Activated CD4-positive, alpha-beta T cell treated with anti-CD3 and anti-CD28 coated beads, Interleukin-2, amount 10 ng/mL, durations not matched to agents 7 days and 5 days (primary cell): ENCODE measurements at regions of chr5 and their contacts with region 1.

Region 1: DNA sequence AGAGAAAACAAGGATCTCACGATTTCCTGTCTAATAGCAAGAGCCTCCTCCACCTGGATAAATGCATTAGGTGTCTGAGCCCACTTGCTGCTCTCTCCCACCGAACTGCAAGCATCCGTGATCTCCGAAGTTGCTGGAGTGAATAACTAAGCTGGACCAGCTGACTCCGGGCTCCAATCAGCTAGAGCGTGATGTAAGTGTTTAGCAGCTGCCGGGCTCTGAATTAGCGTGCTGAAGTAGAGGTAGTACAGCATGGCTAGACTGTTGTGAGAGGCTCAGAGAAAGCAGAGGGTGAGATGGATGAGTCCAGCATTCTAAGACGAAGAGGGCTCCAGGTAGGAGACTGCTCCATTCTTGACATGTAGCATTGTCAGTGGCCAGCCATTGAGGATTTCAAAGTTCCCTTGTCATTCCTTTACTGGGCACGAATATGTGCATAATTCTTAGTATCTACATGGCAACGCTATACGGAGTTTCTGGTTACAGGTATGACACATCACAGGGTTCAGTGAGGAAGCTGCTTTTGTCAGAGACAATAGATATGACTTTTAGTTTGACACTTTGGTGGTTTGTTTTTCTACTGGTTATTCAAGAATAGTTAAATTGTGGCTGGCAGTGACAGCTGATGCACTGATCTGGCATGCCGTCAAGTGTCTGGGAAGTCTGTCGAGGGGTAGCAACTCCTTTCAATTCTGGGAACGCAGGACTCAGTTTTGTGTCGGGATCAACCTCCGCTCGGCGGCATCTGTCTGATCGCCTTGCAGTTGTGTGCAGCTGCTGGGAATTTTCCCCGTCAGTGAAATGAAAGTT is 232.6 kb downstream of the MAST4 start:
- DNase-seq: peak; percentile 79
- H3K4me3 Mint-ChIP-seq: peak overlapping the region; percentile 83
- H3K27ac Mint-ChIP-seq: peak overlapping the region; percentile 89
- H3K4me1 Mint-ChIP-seq: peaks cover 51% of the 10 kb centered on the region
- H3K27me3 Mint-ChIP-seq: no peaks in the 10 kb centered on the region

Region 2: DNA sequence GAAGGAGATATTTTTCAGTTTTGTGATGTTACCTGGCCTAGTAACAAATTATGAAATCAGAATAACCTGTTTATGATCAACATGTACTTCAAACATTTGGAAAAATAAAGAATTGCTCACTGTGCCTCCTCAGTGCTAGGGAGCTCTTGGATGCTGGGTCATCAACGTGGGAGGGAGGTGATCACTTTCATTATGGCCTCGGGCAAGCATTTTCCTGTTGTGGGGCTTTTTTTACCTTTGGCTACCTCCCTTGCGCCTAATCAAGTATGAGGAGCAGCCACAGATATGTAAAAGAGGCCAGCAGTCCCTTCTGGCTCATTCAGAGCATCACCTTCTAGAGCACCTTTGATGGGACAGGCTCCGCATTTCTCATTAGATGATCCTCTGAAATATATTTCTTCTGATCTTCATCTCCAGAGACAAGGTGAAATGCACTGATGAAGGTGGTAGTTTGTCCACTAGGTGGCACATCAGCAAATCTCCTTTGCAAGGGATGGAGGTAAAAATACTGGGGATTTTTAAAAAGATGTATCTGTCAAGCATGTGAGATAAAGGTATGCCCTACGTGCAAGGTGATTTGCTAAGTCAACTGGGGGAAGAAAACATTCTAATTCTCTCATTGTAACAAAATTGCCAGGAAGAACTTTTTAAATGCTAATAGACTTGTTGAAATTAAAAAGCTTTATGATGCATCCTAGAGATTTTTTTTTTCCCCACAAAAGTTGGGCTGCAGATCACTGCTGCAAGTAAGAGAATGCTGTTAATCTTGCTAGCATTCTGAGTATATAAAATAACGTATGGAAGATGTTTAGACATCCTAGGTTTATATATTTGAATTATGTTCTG is 14.4 kb before region 1 on chr5:
- CTCF ChIA-PET with region 1: interaction called, 29 read pairs
- POLR2A ChIA-PET with region 1: no interaction called
- DNase-seq: peak; percentile 67
- H3K4me3 Mint-ChIP-seq: no peak overlapping the region
- H3K27ac Mint-ChIP-seq: no peak overlapping the region
- H3K4me1 Mint-ChIP-seq: peaks cover 21% of the 10 kb centered on the region
- H3K27me3 Mint-ChIP-seq: peaks cover 6% of the 10 kb centered on the region

Region 3: DNA sequence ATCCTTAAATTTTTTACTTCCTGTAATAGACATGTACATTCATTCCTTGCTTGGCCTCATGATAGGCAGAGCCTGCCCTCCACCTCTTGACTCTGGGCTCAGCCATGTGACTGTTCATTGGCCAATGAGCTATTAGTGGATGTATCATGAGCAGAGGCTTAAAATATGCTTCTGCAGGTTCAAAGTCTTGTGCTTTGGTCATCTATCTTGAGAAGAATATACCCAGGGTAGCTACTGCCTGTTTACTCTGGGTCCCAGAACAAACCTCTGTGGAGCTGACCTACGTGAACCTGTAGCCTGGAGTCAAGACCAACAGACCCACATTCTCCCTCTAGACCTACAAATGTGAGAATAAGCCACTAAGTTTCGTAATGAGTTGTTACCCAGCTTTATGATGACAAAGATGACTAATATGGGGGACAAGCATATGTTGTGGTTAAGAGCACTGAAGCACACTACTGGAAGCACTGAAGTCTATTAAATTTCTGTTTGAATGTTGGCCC is 11.8 kb after region 1 on chr5:
- CTCF ChIA-PET with region 1: interaction called, 31 read pairs
- POLR2A ChIA-PET with region 1: interaction called, 9 read pairs
- DNase-seq: peak; percentile 45
- H3K4me3 Mint-ChIP-seq: no peak overlapping the region
- H3K27ac Mint-ChIP-seq: peak overlapping the region; percentile 31
- H3K4me1 Mint-ChIP-seq: peaks cover 57% of the 10 kb centered on the region
- H3K27me3 Mint-ChIP-seq: no peaks in the 10 kb centered on the region

Region 4: GRCh38 chr5:67133776-67134175 is 305.0 kb after region 1 on chr5:
- CTCF ChIA-PET with region 1: no interaction called
- POLR2A ChIA-PET with region 1: no interaction called
- DNase-seq: no peak
- H3K4me3 Mint-ChIP-seq: no peak overlapping the region
- H3K27ac Mint-ChIP-seq: no peak overlapping the region
- H3K4me1 Mint-ChIP-seq: no peaks in the 10 kb centered on the region
- H3K27me3 Mint-ChIP-seq: no peaks in the 10 kb centered on the region